ENCODE measurements at regions of chr15 and their contacts with region 1.

Region 1: GRCh38 chr15:74906446-74907162 is at the start of gene FAM219B:
- DNase-seq: peak; percentile 84
- H3K4me3 Mint-ChIP-seq: peak within 1 kb of the TSS; percentile 91
- H3K27ac Mint-ChIP-seq: peak within 1 kb of the TSS; percentile 87
- H3K4me1 Mint-ChIP-seq: peaks cover 45% of the 10 kb centered on the region
- H3K27me3 Mint-ChIP-seq: no peaks in the 10 kb centered on the region
- total RNA-seq, gene FAM219B: 103 to 116 TPM

Region 2: DNA sequence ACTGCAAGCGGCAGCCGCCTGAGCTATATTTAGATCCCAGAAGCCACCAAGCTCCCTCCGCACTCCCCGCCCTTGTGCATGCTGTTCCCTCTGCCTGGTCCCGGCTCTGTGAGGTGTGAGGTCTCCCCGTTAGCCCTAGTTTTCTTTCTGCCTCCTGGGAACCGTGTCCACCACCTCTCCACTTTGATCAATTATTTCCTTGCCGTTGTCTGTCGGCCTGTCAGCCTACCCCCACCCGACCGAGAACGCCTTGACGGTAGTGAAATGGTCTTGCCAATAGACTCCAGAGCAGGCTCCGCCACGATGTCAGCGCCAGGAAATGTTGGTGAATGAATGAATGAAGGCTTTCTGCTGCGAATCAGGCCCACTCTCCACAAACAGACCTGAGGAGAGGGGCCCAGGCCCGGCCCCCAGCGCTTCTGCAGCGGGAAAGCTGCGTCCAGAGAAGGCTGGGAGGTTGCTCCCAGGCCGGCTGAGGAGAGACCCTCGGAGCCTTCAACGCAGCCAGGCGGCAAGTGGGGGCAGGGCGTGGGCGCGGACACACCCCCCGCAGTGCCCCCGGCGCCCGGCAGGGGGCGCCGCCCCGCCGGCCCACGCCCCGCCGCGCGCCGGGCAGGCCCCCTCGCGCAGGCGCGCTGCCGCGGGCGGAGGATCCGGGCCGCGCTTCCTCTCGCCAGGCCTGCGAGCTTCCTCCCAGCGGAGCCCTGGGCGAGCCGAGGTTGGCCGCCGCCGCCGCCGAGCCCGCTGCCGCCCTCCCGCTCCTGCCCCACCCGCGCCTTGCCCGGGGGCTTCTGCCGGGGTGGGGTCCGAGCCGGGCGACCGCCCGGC is 125.0 kb before region 1 on chr15 and contains the start of gene CSK:
- CTCF ChIA-PET with region 1: interaction called, 22 read pairs
- POLR2A ChIA-PET with region 1: interaction called, 16 read pairs
- DNase-seq: peak; percentile 83
- H3K4me3 Mint-ChIP-seq: peak within 1 kb of the TSS; percentile 91
- H3K27ac Mint-ChIP-seq: peak within 1 kb of the TSS; percentile 100
- H3K4me1 Mint-ChIP-seq: peaks cover 60% of the 10 kb centered on the region
- H3K27me3 Mint-ChIP-seq: no peaks in the 10 kb centered on the region
- total RNA-seq, gene CSK: 330 to 341 TPM

Region 3: GRCh38 chr15:74833376-74834107 is 73.1 kb before region 1 on chr15:
- CTCF ChIA-PET with region 1: interaction called, 11 read pairs
- POLR2A ChIA-PET with region 1: interaction called, 4 read pairs
- DNase-seq: no peak
- H3K4me3 Mint-ChIP-seq: no peak overlapping the region
- H3K27ac Mint-ChIP-seq: no peak overlapping the region
- H3K4me1 Mint-ChIP-seq: peaks cover 14% of the 10 kb centered on the region
- H3K27me3 Mint-ChIP-seq: no peaks in the 10 kb centered on the region

Region 4: GRCh38 chr15:74857082-74857655 is 49.4 kb before region 1 on chr15:
- CTCF ChIA-PET with region 1: interaction called, 37 read pairs
- POLR2A ChIA-PET with region 1: interaction called, 4 read pairs
- DNase-seq: no peak
- H3K4me3 Mint-ChIP-seq: no peak overlapping the region
- H3K27ac Mint-ChIP-seq: peak overlapping the region; percentile 85
- H3K4me1 Mint-ChIP-seq: peaks cover 40% of the 10 kb centered on the region
- H3K27me3 Mint-ChIP-seq: no peaks in the 10 kb centered on the region

Region 5: GRCh38 chr15:74884428-74885223 is 22.0 kb before region 1 on chr15:
- CTCF ChIA-PET with region 1: interaction called, 20 read pairs
- POLR2A ChIA-PET with region 1: interaction called, 21 read pairs
- DNase-seq: no peak
- H3K4me3 Mint-ChIP-seq: no peak overlapping the region
- H3K27ac Mint-ChIP-seq: no peak overlapping the region
- H3K4me1 Mint-ChIP-seq: peaks cover 33% of the 10 kb centered on the region
- H3K27me3 Mint-ChIP-seq: no peaks in the 10 kb centered on the region

Region 6: GRCh38 chr15:74920456-74920855 is 13.9 kb after region 1 on chr15:
- CTCF ChIA-PET with region 1: interaction called, 20 read pairs
- POLR2A ChIA-PET with region 1: interaction called, 4 read pairs
- DNase-seq: no peak
- H3K4me3 Mint-ChIP-seq: no peak overlapping the region
- H3K27ac Mint-ChIP-seq: no peak overlapping the region
- H3K4me1 Mint-ChIP-seq: peaks cover 15% of the 10 kb centered on the region
- H3K27me3 Mint-ChIP-seq: no peaks in the 10 kb centered on the region

Region 7: GRCh38 chr15:74950078-74951000 is 43.7 kb after region 1 on chr15:
- CTCF ChIA-PET with region 1: interaction called, 18 read pairs
- POLR2A ChIA-PET with region 1: interaction called, 5 read pairs
- DNase-seq: peak; percentile 83
- H3K4me3 Mint-ChIP-seq: no peak overlapping the region
- H3K27ac Mint-ChIP-seq: no peak overlapping the region
- H3K4me1 Mint-ChIP-seq: peaks cover 15% of the 10 kb centered on the region
- H3K27me3 Mint-ChIP-seq: peaks cover 1% of the 10 kb centered on the region

Region 8: GRCh38 chr15:74988007-74988800 is 81.6 kb after region 1 on chr15:
- CTCF ChIA-PET with region 1: no interaction called
- POLR2A ChIA-PET with region 1: no interaction called
- DNase-seq: peak; percentile 59
- H3K4me3 Mint-ChIP-seq: no peak overlapping the region
- H3K27ac Mint-ChIP-seq: no peak overlapping the region
- H3K4me1 Mint-ChIP-seq: peaks cover 18% of the 10 kb centered on the region
- H3K27me3 Mint-ChIP-seq: peaks cover 21% of the 10 kb centered on the region

Region 9: DNA sequence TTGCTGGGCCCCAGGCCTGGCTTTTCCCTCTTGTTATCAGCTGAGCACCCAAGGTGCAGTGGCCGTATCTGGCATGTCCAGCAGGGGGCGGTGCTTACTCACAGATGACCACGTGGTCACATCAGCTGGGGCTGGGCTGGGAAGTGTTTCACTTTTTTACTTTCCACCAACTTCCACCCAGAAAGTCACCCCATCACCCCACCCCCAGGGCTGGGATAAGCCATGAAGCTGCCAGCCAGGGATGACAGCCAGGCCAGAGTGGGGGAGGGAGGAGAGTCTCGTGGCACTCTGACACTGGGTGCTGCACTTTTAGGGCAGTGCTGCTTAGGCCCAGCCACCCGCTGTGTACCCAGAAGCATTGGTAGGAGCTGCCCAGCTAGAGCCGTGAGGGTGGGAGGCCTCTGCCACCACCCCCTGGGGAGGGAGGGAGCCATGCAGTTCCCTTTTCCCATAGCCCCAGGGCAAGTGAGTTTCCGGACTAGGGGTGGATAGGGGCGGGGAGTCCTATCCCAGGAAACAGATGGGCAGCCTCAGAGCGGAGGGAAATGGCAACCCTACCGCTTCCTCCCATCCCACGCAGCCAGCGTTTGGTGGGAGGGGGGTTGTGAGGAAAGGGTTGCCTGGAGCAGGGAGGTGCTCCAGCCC is 122.9 kb after region 1 on chr15:
- CTCF ChIA-PET with region 1: no interaction called
- POLR2A ChIA-PET with region 1: no interaction called
- DNase-seq: peak; percentile 91
- H3K4me3 Mint-ChIP-seq: no peak overlapping the region
- H3K27ac Mint-ChIP-seq: peak overlapping the region; percentile 59
- H3K4me1 Mint-ChIP-seq: peaks cover 42% of the 10 kb centered on the region
- H3K27me3 Mint-ChIP-seq: no peaks in the 10 kb centered on the region

Region 10: DNA sequence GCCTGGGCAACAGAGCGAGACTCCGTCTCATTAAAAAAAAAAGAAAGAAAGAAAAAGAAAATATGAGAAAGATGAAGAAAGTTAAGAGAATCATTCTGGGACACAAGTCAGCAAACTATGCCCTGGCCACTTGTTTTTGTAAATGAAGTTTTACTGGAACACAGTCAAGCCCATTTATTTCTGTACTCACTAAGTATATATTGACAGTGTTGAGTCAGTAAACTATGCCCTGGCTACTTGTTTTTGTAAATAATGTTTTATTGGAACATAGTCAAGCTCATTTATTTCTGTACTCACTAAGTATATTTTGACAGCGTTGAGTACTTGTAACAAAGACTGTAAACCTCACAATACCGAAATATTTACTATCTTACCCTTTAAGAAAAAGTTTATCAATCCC is 587.1 kb after region 1 on chr15:
- CTCF ChIA-PET with region 1: no interaction called
- POLR2A ChIA-PET with region 1: no interaction called
- DNase-seq: no peak
- H3K4me3 Mint-ChIP-seq: no peak overlapping the region
- H3K27ac Mint-ChIP-seq: no peak overlapping the region
- H3K4me1 Mint-ChIP-seq: no peaks in the 10 kb centered on the region
- H3K27me3 Mint-ChIP-seq: no peaks in the 10 kb centered on the region